Dorsolateral prefrontal cortex (tissue), 120 donors: ENCODE measurements at regions of chr14 and their contacts with region 1.

Region 1: DNA sequence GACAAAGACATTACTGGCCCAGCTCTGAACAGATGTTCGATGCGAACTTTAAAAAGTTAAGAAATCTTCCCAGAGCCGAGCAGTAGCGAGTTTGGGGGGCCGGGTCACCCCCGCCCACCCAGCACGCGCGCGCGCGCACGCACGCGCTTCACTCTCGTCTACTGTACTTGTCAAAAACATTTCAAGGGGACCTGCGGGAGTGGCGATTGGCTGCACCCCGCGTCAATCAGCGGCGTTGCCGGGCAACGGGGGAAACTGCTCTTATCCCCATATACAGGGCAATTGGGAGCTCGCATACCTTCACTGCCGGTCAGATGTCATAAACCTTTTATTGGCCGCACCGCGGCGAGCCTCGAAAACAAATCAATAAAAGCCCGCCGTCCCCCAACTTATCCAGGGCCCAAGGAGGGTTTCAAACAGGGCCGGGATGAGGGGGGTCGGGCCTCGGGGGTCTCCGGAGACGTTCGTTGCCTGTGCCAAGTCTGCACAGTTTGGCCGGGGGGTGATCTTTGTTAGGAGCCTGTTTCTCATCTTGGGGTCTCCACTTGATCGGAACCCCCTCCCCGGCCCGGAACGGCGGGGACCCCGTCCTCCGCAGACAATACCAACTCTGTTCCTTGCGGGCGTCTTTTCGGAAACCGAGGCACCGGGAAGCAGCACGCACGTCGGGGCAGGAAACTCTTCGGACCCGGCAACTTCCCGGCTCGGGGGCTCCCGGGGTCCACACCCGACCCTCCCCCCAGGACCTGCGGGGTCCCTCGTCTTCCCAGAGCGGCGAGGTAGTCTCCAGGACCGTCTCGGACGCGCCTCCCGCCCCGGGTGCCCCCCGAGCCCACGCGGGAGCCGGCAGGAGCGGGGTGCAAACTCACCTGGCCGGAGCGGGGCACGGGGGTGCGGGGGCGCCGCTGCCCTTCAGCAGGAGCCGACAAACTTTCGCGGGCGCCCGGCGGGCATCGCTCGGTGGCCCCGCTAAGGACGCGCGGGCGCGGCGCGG is 734 bp downstream of the FOXN3 start:
- DNase-seq: peak; percentile 97 to 99 (median 98)
- H3K4me3 ChIP-seq: peak overlapping the region; percentile 63 to 96 (median 90)
- H3K27ac ChIP-seq: peak overlapping the region in 58 of 59 donors; percentile 40 to 94 (median 85)
- H3K27me3 ChIP-seq: no peaks in the 10 kb centered on the region
- CTCF ChIP-seq: peak in 2 of 56 donors; percentile 20 to 26

Region 2: DNA sequence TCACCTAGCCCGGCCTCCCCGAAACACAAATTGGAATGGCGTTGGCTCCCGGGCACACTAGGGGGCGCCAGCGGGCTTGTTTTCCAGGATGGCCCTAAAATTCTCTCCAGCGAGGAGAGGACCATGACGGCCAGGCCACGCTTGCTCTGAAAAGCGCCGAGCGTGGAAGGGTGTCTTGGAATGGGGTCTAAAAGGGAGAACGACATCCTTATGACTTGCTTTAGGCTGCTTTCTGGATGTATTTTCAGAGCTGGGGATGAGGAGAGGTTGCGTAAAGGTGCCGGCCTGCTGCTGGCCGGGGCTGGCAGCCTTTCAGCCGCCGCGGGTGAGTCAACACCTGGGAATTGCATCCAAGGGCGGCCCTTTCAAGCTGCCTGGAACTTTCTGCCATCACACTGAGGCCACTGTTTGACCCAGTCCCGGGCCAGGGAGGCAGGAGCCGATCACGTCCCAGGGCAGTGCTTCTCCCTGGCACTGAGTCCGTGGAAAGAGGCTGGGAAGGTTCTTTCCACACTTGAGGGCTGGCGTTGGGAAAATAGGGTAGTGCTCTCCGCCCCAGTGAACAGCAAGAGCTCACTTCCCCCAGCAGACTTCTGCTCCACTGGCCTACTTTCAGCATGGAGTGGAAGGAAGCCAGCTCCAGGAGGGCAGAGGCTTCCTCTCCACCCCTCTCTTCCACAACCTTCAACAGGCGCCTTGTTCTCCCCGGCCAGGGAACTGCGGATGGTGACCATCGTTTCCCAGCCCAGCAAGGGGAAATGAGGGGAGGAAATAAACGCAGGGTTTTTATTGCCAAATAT is 375.6 kb before region 1 on chr14:
- intact Hi-C with region 1: loop called (anchors 5 kb)
- DNase-seq: peak; percentile 79 to 93 (median 88)
- H3K4me3 ChIP-seq: peak overlapping the region; percentile 33 to 80 (median 62)
- H3K27ac ChIP-seq: peak overlapping the region in 56 of 59 donors; percentile 1 to 91 (median 76)
- H3K27me3 ChIP-seq: no peaks in the 10 kb centered on the region
- CTCF ChIP-seq: peak; percentile 78 to 97 (median 93)

Region 3: DNA sequence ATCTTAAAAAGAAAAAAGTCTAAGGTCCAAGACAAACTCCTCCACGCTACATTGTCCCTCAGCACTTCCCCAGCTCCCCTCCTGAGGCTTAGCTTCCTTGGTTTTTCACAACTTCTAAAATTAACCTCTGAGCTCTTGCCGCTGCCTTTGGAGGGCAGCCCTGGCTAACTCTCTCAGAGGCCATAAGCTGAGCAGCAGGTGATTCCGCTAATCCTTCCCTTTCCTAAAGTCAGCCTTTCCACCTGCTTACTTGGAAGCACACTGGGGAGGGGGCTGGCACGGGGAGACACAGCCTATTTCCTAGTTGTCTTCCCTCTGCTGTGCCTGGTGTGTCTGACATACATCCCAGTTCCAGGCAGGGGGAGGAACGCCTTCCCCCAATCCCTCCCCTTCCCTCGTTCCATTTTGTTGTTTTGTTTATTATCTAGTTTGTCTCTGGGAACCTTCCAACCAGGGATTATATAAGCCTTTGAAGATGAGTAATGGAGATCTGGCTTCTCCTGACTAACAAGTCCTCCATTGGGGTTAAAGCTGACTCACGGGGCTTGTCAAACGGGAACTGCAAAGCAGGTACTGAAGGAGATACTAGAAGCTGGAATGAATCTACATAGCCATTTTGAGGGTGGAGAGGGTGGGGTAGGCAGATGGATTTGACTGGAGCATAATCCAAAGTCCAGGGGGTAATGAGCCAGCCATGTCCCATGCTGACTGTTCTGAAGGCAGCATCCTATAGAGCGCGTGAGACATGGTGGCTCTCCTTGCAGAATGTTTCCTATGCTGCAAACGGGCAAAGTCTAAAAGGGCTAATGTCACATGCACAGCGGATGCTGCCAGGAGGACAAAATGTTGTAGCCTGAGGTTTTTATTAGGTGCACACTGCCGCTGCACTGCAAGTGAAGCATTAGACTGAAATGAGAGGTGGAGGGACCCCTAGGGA is 230.1 kb before region 1 on chr14:
- intact Hi-C with region 1: loop called in 1 of 2 experiments (anchors 5 kb)
- DNase-seq: peak in 1 of 10 donors; percentile 92
- H3K4me3 ChIP-seq: no peak overlapping the region
- H3K27ac ChIP-seq: peak overlapping the region in 48 of 59 donors; percentile 11 to 96 (median 62)
- H3K27me3 ChIP-seq: no peaks in the 10 kb centered on the region
- CTCF ChIP-seq: no peak

Region 4: GRCh38 chr14:89486505-89486904 is 70.2 kb after region 1 on chr14:
- intact Hi-C with region 1: loop called in 1 of 2 experiments (anchors 2 kb)
- DNase-seq: no peak
- H3K4me3 ChIP-seq: peak overlapping the region in 5 of 59 donors; percentile 1 to 7 (median 4)
- H3K27ac ChIP-seq: peak overlapping the region in 26 of 59 donors; percentile 2 to 44 (median 26)
- H3K27me3 ChIP-seq: no peaks in the 10 kb centered on the region
- CTCF ChIP-seq: no peak

Region 5: GRCh38 chr14:89701211-89702043 is 285.1 kb after region 1 on chr14:
- intact Hi-C with region 1: loop called in 1 of 2 experiments (anchors 5 kb)
- DNase-seq: peak; percentile 51 to 84 (median 70)
- H3K4me3 ChIP-seq: peak overlapping the region; percentile 51 to 86 (median 74)
- H3K27ac ChIP-seq: peak overlapping the region in 39 of 59 donors; percentile 1 to 76 (median 49)
- H3K27me3 ChIP-seq: no peaks in the 10 kb centered on the region
- CTCF ChIP-seq: peak in 1 of 56 donors; percentile 1